ENCODE measurements at regions of chr3 and their contacts with region 1.

Region 1: GRCh38 chr3:64533617-64534317 is 154.0 kb downstream of the ADAMTS9 start:
- DNase-seq: peak; percentile 70
- H3K4me3 Mint-ChIP-seq: no peak overlapping the region
- H3K27ac Mint-ChIP-seq: no peak overlapping the region
- H3K4me1 Mint-ChIP-seq: peaks cover 6% of the 10 kb centered on the region
- H3K27me3 Mint-ChIP-seq: peaks cover 21% of the 10 kb centered on the region

Region 2: DNA sequence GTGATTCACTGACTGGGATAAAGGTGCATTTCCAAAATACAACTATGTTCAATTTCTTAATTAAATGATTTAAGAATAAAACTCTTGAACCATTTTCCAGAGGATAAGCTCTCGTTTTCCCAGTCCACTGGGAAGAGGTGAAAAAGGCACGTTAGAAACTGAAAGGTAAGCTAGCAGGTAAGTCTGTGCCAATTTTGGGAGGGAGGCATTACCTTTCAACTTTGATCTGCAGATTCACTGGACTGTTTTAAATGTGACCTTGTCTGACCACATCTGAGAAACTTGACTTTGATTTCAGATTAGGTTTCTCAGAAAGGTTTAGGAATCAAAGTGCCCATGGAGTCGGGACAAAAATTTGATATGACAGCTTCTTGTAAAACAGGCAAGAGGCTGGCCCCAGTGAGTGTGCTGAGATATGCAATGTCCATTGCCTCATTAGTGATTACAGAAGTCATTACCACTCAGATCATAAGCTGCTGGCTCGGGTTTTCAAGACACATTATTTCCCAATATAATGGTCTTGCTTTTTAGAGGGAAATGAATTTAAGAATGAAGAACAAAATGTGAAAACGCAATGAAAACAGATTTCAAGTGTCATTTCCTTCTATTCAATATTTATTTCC is 35.2 kb after region 1 on chr3:
- CTCF ChIA-PET with region 1: no interaction called
- intact Hi-C with region 1: no loop called
- DNase-seq: no peak
- H3K4me3 Mint-ChIP-seq: no peak overlapping the region
- H3K27ac Mint-ChIP-seq: no peak overlapping the region
- H3K4me1 Mint-ChIP-seq: no peaks in the 10 kb centered on the region
- H3K27me3 Mint-ChIP-seq: peaks cover 5% of the 10 kb centered on the region

Region 3: GRCh38 chr3:65439641-65440284 is 906.0 kb after region 1 on chr3:
- CTCF ChIA-PET with region 1: no interaction called
- intact Hi-C with region 1: loop called (anchors 10 kb)
- DNase-seq: no peak
- H3K4me3 Mint-ChIP-seq: no peak overlapping the region
- H3K27ac Mint-ChIP-seq: no peak overlapping the region
- H3K4me1 Mint-ChIP-seq: no peaks in the 10 kb centered on the region
- H3K27me3 Mint-ChIP-seq: no peaks in the 10 kb centered on the region

Region 4: GRCh38 chr3:65672871-65673815 is 1139.4 kb after region 1 on chr3:
- CTCF ChIA-PET with region 1: no interaction called
- intact Hi-C with region 1: loop called (anchors 1 kb)
- DNase-seq: peak; percentile 42
- H3K4me3 Mint-ChIP-seq: no peak overlapping the region
- H3K27ac Mint-ChIP-seq: no peak overlapping the region
- H3K4me1 Mint-ChIP-seq: no peaks in the 10 kb centered on the region
- H3K27me3 Mint-ChIP-seq: peaks cover 3% of the 10 kb centered on the region

Region 5: DNA sequence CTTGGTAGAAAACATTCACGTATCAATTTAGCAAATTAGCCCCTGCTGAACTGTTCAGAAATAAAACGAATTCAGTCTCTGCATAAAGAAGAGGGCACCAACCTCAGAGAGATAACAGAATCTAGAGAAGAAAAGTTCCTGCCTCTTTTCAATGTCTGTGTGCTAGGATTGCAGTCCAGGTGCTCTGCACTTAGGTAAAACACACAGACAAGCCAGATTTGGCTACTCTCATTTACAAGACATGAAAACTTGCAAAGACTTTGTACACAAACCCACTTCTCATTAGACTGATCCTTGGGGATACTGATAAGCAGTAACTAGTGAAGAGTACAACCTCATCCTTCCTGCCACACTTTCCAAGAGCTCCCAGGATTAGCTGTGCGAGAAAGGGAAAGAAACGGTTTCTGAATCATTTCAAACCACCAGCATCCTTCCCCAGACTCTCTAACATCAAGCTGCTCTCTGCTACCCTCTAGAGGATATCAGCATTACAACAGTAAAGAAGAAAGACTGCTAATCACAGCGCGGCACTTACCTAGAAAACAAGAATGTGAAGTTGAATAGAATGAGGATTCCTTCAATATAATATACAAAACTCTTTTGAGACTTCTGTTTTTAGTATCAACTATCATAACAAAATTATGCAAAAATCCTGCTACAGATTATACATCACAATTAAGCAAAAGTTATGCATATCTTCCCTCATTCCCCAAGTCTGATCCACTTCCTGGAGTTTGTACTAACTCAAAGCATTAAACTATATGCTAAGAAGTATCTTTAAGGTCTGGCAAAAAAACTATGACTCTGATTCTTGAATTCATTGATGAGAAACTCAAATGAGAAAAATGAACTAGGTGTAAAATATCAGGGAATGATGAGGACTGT is 1198.5 kb after region 1 on chr3:
- CTCF ChIA-PET with region 1: interaction called, 4 read pairs
- intact Hi-C with region 1: loop called (anchors 1 kb)
- DNase-seq: peak; percentile 5
- H3K4me3 Mint-ChIP-seq: no peak overlapping the region
- H3K27ac Mint-ChIP-seq: no peak overlapping the region
- H3K4me1 Mint-ChIP-seq: no peaks in the 10 kb centered on the region
- H3K27me3 Mint-ChIP-seq: no peaks in the 10 kb centered on the region

Region 6: DNA sequence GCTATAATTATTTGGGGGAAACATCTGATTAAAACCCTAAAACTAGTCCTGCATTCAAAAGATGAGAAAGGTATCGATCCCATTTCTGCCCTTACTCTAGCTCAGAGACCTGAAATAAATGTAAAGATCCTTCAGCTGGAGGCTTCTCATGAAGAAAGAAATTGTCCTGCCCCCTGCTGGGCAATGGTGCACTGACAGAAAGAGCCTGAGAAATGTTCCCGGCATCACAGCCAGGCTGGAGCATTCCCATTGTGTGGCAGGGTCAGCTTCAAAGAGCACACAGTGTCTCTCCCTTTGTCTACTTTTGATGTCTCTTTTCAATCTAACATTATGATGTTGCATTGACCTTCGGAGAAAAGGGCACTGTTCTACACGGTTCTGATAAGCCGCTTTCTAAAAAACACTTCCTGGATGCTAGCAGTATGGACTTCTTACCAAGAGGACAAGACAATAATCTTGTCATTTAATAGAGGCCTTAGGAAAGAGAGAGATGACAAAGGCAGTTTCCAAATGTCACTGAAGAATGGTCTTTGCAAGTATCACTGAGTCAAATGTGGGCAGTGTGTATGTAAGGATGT is 1217.4 kb after region 1 on chr3:
- CTCF ChIA-PET with region 1: no interaction called
- intact Hi-C with region 1: loop called (anchors 5 kb)
- DNase-seq: peak; percentile 7
- H3K4me3 Mint-ChIP-seq: no peak overlapping the region
- H3K27ac Mint-ChIP-seq: no peak overlapping the region
- H3K4me1 Mint-ChIP-seq: no peaks in the 10 kb centered on the region
- H3K27me3 Mint-ChIP-seq: no peaks in the 10 kb centered on the region

Measured in activated naive CD4-positive, alpha-beta T cell treated with anti-CD3 and anti-CD28 coated beads for 36 hours (primary cell).